PC-9 (cell line): ENCODE measurements at regions of chr6 and their contacts with region 1.

Region 1: DNA sequence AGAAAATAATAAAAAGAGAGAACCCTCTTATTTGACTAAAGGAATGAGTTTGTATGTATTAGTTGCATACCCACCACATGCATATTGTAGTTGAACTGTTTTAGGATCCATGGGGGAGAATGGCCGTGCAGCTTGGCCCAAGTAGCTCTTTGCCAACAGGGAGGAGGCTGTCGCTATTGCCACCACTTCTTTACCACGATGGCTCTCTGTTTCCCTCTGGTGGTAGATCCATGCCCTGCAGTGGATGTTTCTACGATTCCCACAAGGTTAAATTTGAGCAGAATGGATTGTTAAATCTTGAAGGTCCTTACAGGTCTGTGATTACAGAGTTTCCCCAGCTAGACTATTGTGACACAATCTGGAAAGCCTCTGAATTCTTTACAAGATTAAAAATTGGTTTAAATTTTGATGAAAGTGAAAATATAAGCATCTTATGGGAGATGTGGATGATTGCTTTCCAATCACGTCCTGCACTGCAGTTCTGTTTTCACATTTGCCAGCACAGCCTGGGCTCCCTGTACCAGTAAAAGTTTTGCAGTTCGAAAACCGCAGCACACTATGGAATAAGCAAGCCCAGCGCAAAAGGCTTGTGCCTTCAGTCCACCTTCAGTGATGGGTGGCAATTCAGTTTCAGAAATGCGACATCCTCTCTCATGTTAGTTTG is 34.4 kb upstream of the FNDC1 start:
- DNase-seq: peak; percentile 49 to 54
- H3K4me3 ChIP-seq: no peak overlapping the region
- H3K27ac ChIP-seq: no peak overlapping the region
- H3K4me1 ChIP-seq: no peaks in the 10 kb centered on the region
- H3K27me3 ChIP-seq: peaks cover 9% of the 10 kb centered on the region
- CTCF ChIP-seq: peak; percentile 94

Region 2: DNA sequence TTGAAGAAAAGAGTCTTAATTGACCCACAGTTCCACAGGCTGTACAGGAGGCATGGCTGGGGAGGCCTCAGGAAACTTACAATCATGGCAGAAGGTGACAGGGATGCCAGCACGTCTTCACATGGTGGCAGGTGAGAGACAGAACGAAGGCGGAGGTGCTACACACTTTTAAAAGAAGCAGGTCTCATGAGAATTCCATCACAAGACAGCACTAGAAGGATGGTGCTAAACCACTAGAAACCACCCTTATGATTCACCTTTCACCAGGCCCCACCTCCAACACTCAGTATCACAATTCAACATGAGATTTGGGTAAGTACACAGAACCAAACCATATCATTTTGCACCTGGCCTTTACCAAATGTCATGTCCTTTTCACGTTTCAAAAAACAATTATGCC is 110.9 kb before region 1 on chr6:
- CTCF ChIA-PET with region 1: no interaction called
- POLR2A ChIA-PET with region 1: no interaction called
- intact Hi-C with region 1: no loop called
- DNase-seq: no peak
- H3K4me3 ChIP-seq: no peak overlapping the region
- H3K27ac ChIP-seq: no peak overlapping the region
- H3K4me1 ChIP-seq: no peaks in the 10 kb centered on the region
- H3K27me3 ChIP-seq: no peaks in the 10 kb centered on the region
- CTCF ChIP-seq: no peak

Region 3: GRCh38 chr6:159042003-159042825 is 92.6 kb before region 1 on chr6:
- CTCF ChIA-PET with region 1: interaction called, 5 read pairs
- POLR2A ChIA-PET with region 1: no interaction called
- intact Hi-C with region 1: loop called (anchors 10 kb)
- DNase-seq: peak; percentile 61 to 66
- H3K4me3 ChIP-seq: peak overlapping the region; percentile 45; the same call in 1 of the 2 replicates
- H3K27ac ChIP-seq: no peak overlapping the region
- H3K4me1 ChIP-seq: peaks cover 14% of the 10 kb centered on the region
- H3K27me3 ChIP-seq: no peaks in the 10 kb centered on the region
- CTCF ChIP-seq: peak; percentile 94

Region 4: DNA sequence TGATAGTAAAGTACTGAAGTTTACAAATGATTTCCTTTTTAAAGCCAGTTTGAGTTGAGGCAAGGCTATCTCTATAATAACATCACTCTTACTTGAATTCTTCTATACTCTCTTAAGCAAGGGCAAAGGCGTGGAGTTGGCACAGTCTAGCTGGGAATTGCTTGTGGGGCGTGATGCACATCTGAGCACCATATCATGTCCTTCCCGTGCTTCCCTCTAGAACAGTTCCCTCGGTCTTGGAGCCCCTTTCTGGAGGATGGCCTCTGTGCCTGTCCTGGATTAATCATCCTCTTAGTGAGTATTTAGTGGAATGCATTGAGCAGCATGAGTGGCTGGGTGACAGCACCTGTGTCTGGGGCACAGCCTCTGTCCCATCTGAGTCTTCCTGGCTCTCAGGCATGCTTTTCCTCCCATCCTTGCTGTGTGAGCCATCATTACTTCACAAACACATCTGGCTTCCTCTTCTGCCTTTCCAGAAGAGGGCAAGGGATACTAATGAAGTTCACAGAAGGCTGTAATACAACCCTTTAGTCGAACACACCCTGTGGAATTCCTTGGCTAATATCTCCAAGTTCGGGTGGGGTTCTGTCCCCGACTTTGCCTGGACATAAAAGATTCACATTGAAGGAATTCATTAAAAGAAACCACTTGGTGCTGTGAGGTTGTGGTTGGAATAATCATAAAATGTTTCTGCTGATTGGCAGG is 222.5 kb after region 1 on chr6:
- CTCF ChIA-PET with region 1: no interaction called
- POLR2A ChIA-PET with region 1: no interaction called
- intact Hi-C with region 1: no loop called
- DNase-seq: no peak
- H3K4me3 ChIP-seq: no peak overlapping the region
- H3K27ac ChIP-seq: no peak overlapping the region
- H3K4me1 ChIP-seq: no peaks in the 10 kb centered on the region
- H3K27me3 ChIP-seq: peaks cover 6% of the 10 kb centered on the region; the same call in 1 of the 2 replicates
- CTCF ChIP-seq: no peak

Region 5: GRCh38 chr6:159761873-159762680 is 627.2 kb after region 1 on chr6 and contains the start of gene ACAT2:
- CTCF ChIA-PET with region 1: no interaction called
- POLR2A ChIA-PET with region 1: no interaction called
- intact Hi-C with region 1: no loop called
- DNase-seq: peak; percentile 87 to 89
- H3K4me3 ChIP-seq: peak within 1 kb of the TSS; percentile 98
- H3K27ac ChIP-seq: peak within 1 kb of the TSS; percentile 79
- H3K4me1 ChIP-seq: peaks cover 14% of the 10 kb centered on the region
- H3K27me3 ChIP-seq: no peaks in the 10 kb centered on the region
- CTCF ChIP-seq: no peak
- total RNA-seq, gene ACAT2: 48.5 and 71.0 TPM in 2 replicates